ENCODE measurements at regions of chr2 and their contacts with region 1.

Region 1: GRCh38 chr2:9951272-9951972 is at the start of gene GRHL1:
- DNase-seq: peak; percentile 85 to 96
- H3K4me3 ChIP-seq: peak within 1 kb of the TSS; percentile 61
- H3K27ac ChIP-seq: peak within 1 kb of the TSS; percentile 64
- H3K4me1 ChIP-seq: peaks cover 30% of the 10 kb centered on the region
- H3K27me3 ChIP-seq: no peaks in the 10 kb centered on the region
- CTCF ChIP-seq: no peak
- total RNA-seq, gene GRHL1: 8.6 and 10.6 TPM in 2 replicates

Region 2: DNA sequence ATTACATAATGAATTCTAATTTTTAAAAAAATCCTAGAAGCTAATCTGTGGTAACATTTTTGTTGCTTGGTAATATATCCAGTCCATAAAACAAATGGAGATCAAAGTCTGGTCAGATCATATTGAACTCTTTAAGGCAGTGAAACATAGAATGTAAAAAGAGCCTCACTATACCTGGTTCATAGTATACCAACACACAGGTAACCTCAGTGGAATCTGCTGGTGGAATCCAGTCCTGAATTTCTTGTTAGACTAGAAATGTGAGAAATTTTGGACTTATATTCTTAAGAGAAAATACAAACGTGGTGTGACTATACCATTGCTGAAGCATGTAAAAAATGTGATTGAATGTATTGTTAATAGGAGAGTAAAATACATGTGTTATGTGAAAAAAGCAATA is 46.0 kb before region 1 on chr2:
- CTCF ChIA-PET with region 1: no interaction called
- POLR2A ChIA-PET with region 1: no interaction called
- intact Hi-C with region 1: loop called (anchors 2 kb)
- DNase-seq: peak; percentile 14 to 99
- H3K4me3 ChIP-seq: no peak overlapping the region; the same call in 1 of the 2 replicates
- H3K27ac ChIP-seq: peak overlapping the region; percentile 71
- H3K4me1 ChIP-seq: peaks cover 36% of the 10 kb centered on the region
- H3K27me3 ChIP-seq: no peaks in the 10 kb centered on the region
- CTCF ChIP-seq: no peak

Region 3: DNA sequence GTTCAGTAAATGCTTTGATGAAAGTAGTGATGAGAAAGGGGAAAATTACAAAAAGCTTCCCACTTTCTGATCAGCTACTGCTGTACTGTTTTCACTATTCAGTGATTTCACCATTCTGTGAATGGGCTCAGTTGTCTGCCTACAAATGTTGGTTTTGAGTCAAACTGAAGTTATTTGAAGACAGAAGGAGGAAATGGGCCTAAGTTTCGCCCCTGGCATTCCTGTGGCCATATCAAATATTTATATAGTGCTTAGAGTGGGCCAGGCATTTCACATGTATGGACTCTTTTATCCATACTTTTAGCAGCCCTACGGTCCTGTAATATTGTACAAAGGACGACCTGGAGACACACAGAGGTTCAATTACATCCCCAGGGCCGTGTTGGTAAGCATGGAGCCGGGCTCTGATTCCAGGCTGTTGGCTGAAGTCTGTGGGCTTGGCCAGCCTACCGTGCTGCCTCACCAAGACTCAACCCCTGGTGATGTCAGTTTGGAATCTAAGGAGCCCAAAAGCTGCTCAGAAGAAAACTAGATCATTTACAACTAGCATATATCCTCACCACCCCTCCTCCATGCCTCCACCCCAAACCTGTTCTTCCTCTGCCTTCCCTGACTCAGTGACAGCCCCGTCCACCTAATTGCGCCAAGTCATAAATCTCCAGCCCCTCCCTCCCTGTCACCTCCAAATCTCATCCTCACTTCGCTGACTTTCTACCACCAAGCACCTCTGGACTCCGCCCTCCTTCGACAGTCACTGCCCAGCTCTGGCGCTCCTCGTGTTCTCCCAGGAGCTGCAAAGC is 10.0 kb before region 1 on chr2:
- CTCF ChIA-PET with region 1: interaction called, 13 read pairs
- POLR2A ChIA-PET with region 1: interaction called, 7 read pairs
- intact Hi-C with region 1: no loop called
- DNase-seq: peak; percentile 80 to 96
- H3K4me3 ChIP-seq: peak overlapping the region; percentile 40; the same call in 1 of the 2 replicates
- H3K27ac ChIP-seq: peak overlapping the region; percentile 97
- H3K4me1 ChIP-seq: peaks cover 74% of the 10 kb centered on the region
- H3K27me3 ChIP-seq: no peaks in the 10 kb centered on the region
- CTCF ChIP-seq: no peak

Measured in PC-9 (cell line).